Ovary (tissue), 10 donors: ENCODE measurements at regions of chr15 and their contacts with region 1.

Region 1: GRCh38 chr15:25568751-25569150 is 129.9 kb upstream of the UBE3A start:
- DNase-seq: no peak
- H3K4me3 ChIP-seq: no peak overlapping the region
- H3K27ac ChIP-seq: no peak overlapping the region
- H3K4me1 ChIP-seq: no peaks in the 10 kb centered on the region
- H3K27me3 ChIP-seq: no peaks in the 10 kb centered on the region
- CTCF ChIP-seq: no peak
- EP300 ChIP-seq: no peak
- POLR2A ChIP-seq: no peak

Region 2: DNA sequence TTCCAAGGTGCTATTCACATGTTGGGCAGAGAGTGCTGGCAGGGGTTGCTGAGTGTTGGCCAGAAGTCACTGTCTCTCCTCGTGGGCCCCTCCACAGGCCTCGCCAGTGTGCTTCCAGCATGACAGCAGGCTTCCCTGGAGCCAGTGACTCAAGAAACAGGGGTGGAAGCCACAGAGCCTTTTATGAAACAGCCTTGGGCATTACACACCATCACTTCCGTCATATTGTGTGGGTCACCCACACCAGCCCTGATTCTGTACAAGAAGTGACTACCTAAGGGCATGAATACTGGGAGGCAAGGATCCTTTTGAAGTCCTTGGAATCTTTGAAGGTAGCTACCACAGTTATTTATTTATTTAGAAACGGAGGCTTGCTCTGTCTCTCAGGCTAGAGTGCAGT is 47.7 kb after region 1 on chr15:
- intact Hi-C with region 1: loop called in 1 of 4 experiments (anchors 5 kb)
- DNase-seq: no peak
- H3K4me3 ChIP-seq: no peak overlapping the region
- H3K27ac ChIP-seq: no peak overlapping the region
- H3K4me1 ChIP-seq: no peaks in the 10 kb centered on the region
- H3K27me3 ChIP-seq: no peaks in the 10 kb centered on the region
- CTCF ChIP-seq: no peak
- EP300 ChIP-seq: no peak
- POLR2A ChIP-seq: no peak

Region 3: GRCh38 chr15:26051761-26052675 is 483.3 kb after region 1 on chr15:
- intact Hi-C with region 1: loop called in 1 of 4 experiments (anchors 10 kb)
- DNase-seq: no peak
- H3K4me3 ChIP-seq: no peak overlapping the region
- H3K27ac ChIP-seq: no peak overlapping the region
- H3K4me1 ChIP-seq: no peaks in the 10 kb centered on the region
- H3K27me3 ChIP-seq: no peaks in the 10 kb centered on the region
- CTCF ChIP-seq: no peak
- EP300 ChIP-seq: no peak
- POLR2A ChIP-seq: no peak